Heart left ventricle (tissue), 16 donors: ENCODE measurements at regions of chr6 and their contacts with region 1.

Region 1: DNA sequence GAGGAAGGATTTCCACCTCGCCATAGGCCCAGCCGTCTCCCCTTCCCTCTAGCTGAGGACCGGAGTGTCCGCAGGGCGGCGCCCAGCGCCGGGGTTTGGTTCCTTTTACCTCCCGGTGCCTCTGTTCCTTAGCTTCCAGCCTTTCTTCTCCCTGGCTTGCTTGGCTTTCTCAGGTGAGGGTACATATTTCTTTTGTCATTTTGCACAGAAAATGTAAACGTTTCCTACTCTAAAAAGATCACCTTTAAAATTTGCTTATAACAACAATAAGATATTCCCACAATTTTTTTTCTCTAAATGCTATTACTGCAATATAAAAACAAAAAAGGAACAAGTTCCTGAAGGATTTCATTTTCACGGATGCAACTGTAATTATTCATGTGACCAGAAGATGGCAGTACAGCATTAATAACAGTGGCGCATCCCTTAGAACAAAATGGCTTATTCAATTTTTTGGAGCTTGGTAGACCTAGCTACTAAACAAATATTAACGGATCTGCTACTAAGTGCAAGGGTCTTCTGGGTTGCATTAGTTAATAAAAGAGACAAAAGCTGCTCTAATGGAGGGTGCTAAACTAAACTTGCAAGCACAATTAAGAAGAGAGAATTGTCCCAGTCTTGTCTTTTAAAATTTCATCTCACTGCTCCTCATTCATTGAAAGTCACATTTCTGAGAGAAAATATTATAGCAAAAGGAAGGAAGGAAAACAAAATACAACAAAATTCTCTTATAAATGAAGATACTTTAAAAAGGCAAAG is 172.9 kb downstream of the ADGRG6 start:
- DNase-seq: peak in 1 of 5 donors; percentile 51
- ATAC-seq: no peak
- H3K4me3 ChIP-seq: no peak overlapping the region
- H3K27ac ChIP-seq: no peak overlapping the region
- H3K4me1 ChIP-seq: peaks cover 0 to 7% (median 0%) of the 10 kb centered on the region in 12 donors
- H3K27me3 ChIP-seq: peaks cover 0 to 2% (median 0%) of the 10 kb centered on the region in 9 donors
- CTCF ChIP-seq: peak; percentile 74 to 89 (median 80)
- POLR2A ChIP-seq: no peak

Region 2: DNA sequence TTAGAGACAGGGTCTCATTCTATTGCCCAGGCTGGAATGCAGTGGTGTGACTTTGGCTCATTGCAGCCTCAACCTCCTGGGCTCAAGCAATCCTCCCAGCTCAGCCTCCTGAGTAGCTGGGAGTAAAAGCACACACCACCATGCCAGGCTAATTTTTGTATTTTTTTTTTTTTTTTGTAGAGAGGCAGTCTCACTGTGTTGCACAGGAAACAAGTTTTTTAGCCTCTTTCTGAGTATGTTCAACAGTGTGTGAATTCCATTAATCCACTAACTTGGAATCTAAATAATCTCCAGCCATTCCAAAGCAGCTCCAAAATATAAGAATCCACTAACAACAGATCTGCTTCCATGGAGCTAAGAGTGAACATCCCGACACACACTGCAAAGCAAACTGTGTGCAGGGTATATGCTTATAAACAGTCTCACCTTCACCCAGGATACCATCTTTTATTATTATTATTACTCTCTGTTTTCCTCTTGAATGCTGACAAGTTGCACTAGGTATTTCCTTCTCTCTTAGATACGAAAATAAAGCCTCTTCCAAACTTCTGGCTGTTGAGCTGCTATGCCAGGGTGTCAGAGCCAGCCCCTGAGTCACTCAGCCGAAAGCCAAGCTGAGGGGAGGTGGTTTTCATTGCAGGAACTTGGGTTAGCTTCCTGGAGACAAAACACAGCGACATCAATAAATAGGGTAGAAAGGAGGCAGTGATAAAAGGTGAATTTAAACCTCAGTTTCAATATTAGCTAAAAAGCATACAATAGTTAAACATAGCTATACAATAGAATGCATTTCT is 205.4 kb after region 1 on chr6:
- intact Hi-C with region 1: loop called in 1 of 10 experiments (anchors 10 kb)
- DNase-seq: no peak
- ATAC-seq: no peak
- H3K4me3 ChIP-seq: no peak overlapping the region
- H3K27ac ChIP-seq: no peak overlapping the region
- H3K4me1 ChIP-seq: peaks cover 0 to 6% (median 0%) of the 10 kb centered on the region in 12 donors
- H3K27me3 ChIP-seq: peaks cover 0 to 9% (median 0%) of the 10 kb centered on the region in 9 donors
- CTCF ChIP-seq: no peak
- POLR2A ChIP-seq: no peak